Naive thymus-derived CD4-positive, alpha-beta T cell (primary cell): ENCODE measurements at regions of chr13 and their contacts with region 1.

Region 1: DNA sequence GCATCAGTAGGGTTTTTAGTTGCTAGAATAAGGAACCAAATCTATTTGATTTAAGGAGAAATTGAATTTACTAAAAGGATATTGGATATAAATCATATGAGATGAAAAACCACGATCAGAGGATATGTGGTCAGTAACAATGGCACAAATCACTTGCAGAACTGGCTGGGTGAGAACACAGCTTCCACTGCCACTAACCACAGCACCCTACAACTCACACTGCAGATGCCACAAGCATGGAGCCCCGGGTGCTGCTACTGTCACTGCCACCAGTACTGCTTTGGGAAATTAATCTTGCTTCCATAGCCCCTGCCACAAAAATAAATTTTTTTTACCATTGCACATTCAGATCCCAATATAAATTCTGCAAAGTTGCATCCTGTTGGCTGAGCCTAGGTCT is 40.6 kb upstream of the KLF12 start:
- DNase-seq: no peak
- ATAC-seq: peak; percentile 48
- H3K4me3 ChIP-seq: no peak overlapping the region
- H3K4me3 Mint-ChIP-seq: no peak overlapping the region
- H3K27ac ChIP-seq: no peak overlapping the region
- H3K27ac Mint-ChIP-seq: no peak overlapping the region
- H3K4me1 ChIP-seq: peaks cover 0 to 6% of the 10 kb centered on the region in 2 donors
- H3K4me1 Mint-ChIP-seq: peaks cover 0 to 6% (median 3%) of the 10 kb centered on the region in 7 donors
- H3K27me3 ChIP-seq: no peaks in the 10 kb centered on the region
- H3K27me3 Mint-ChIP-seq: peaks cover 0 to 11% (median 1%) of the 10 kb centered on the region in 5 donors

Region 2: DNA sequence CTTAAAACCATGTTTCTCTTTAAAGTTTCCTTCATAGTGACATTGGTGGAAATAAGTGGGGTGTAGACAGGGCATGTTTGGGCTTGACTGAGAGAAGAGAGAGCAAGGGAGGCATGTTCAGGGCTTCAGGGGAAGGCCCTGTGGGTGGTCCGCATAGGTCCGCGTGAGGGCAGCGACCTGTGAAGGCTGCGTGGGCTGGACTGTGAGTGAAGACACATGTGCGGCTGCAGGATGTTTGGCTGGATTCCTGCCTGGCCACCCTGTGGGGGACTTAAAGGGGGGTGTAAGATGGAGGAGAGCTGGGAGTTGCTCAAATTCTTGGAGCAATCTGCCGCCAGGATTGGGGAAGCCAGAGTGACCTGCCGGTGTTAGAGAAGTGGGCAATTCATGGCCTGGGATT is 16.8 kb before region 1 on chr13:
- CTCF ChIA-PET with region 1: no interaction called
- POLR2A ChIA-PET with region 1: no interaction called
- intact Hi-C with region 1: loop called in 1 of 2 experiments (anchors 2 kb)
- DNase-seq: no peak
- ATAC-seq: no peak
- H3K4me3 ChIP-seq: no peak overlapping the region
- H3K4me3 Mint-ChIP-seq: no peak overlapping the region
- H3K27ac ChIP-seq: no peak overlapping the region
- H3K27ac Mint-ChIP-seq: no peak overlapping the region
- H3K4me1 ChIP-seq: no peaks in the 10 kb centered on the region
- H3K4me1 Mint-ChIP-seq: peaks cover 0 to 10% (median 0%) of the 10 kb centered on the region in 7 donors
- H3K27me3 ChIP-seq: no peaks in the 10 kb centered on the region
- H3K27me3 Mint-ChIP-seq: peaks cover 0 to 8% (median 0%) of the 10 kb centered on the region in 5 donors